RWPE1 (cell line): ENCODE measurements at regions of chr20 and their contacts with region 1.

Region 1: DNA sequence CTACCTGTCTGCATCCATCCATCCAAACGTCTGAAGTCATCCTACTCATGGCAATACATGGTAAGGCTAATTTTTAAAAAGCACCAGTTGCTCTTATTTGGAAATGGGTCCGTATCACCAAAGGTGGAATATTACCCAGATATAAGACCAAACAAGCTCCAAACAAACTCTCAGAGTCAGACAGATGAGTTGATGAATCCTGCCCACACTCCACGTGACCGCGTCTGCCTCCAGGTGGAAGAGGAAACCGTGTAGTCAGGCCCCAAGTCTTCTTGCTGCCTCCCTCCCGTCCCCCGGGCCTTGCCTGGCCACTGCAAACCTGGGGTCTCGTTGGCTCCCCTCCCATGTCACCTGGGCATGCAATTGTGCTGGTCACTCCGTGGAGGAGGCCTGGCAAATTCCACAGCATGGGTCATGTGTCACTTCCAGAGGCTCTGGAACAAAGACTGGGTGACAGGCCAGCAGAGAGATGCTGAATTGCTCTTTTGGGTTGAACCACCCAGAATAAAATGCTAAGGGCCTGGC is 31.8 kb downstream of the CTCFL start:
- DNase-seq: no peak
- H3K27ac ChIP-seq: no peak overlapping the region
- CTCF ChIP-seq: no peak

Region 2: GRCh38 chr20:56893226-56893912 is 599.8 kb before region 1 on chr20:
- CTCF ChIA-PET with region 1: no interaction called
- POLR2A ChIA-PET with region 1: interaction called, 10 read pairs
- DNase-seq: no peak
- H3K27ac ChIP-seq: no peak overlapping the region
- CTCF ChIP-seq: no peak

Region 3: DNA sequence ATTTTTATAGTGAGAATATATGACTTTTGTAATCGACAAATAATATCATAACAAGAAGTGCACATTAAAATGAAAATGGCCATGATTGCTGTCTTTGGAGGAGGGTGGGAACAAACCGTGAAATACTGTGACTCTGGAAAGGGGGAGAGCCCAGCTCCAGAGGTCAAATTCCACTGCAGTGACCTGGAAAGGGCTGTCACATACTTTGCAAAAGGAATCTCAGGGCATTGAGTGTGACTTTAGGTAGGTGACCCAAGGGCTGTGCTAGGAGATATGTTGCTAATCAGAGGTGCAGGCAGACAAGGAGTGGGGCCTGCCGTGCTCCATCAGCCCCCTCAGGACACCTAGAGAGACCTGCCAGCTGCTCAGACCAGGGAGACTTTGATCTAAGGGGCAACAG is 198.6 kb before region 1 on chr20:
- CTCF ChIA-PET with region 1: no interaction called
- POLR2A ChIA-PET with region 1: no interaction called
- DNase-seq: no peak
- H3K27ac ChIP-seq: no peak overlapping the region
- CTCF ChIP-seq: no peak

Region 4: DNA sequence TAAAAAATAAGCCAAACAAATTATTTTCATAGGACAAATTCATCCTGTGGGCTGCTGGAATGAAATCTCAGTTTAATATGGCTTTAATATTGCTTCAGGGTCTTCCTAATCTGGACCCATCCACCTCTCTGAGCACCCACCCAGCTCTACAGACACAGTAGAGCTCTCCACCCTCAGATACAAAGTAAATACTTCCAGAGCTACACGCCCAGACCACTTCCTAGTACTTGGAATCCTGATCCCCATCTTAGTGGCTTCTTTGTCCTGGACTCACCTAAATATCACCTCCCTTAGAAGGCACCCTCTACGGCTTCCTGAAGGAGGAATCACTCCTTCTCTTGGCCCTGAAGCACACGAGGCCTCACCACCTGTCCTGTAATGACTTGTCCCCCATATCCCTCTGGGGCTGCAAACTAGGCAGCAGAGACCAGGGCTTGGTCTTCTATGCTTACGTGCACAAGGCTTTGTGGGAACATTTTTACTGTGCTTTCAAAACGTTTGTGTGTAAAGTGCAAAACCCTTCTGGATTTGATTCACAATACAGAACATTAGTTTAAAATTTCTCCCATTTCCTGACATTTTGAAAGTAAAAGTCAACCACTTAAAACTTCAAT is 29.3 kb after region 1 on chr20:
- CTCF ChIA-PET with region 1: no interaction called
- POLR2A ChIA-PET with region 1: no interaction called
- DNase-seq: no peak
- H3K27ac ChIP-seq: no peak overlapping the region
- CTCF ChIP-seq: no peak